Heart left ventricle (tissue), 16 donors: ENCODE measurements at regions of chr17 and their contacts with region 1.

Region 1: GRCh38 chr17:75456417-75457046 is at the start of gene TMEM94:
- DNase-seq: peak; percentile 95 to 97 (median 96)
- ATAC-seq: peak; percentile 98 to 99 (median 99)
- H3K4me3 ChIP-seq: peak within 1 kb of the TSS; percentile 80 to 96 (median 86)
- H3K27ac ChIP-seq: peak within 1 kb of the TSS; percentile 79 to 95 (median 90)
- H3K4me1 ChIP-seq: peaks cover 0 to 46% (median 25%) of the 10 kb centered on the region in 12 donors
- H3K27me3 ChIP-seq: no peaks in the 10 kb centered on the region
- CTCF ChIP-seq: no peak
- POLR2A ChIP-seq: peak in 1 of 2 donors; percentile 58
- total RNA-seq, gene TMEM94: 35.7 to 130 (median 52.7) TPM

Region 2: DNA sequence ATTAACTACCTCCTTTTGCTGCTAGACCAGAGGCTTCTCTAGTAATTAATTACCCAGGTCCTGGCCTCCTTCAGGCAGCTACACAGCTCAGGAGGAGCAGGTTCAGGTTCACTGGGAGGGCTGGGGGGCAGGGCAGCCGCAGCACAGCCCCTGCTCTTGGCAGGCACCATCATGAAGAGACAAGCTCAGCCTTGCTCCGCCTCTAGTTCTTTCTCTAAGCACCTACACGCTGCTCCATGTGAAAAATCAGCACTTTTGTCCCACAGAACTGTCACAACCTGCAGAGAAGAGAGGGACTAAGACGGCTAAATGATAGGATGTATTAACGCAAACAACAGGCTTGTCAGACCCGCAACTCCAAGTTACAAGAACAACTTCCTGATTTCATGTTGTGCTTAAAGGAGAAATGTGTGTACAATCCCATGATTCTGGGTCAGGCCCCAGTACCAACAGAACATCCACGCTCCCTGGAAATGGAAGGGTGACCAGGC is 104.4 kb before region 1 on chr17:
- intact Hi-C with region 1: no loop called
- DNase-seq: no peak
- ATAC-seq: no peak
- H3K4me3 ChIP-seq: no peak overlapping the region
- H3K27ac ChIP-seq: peak overlapping the region in 2 of 12 donors; percentile 13 to 34
- H3K4me1 ChIP-seq: peaks cover 0 to 85% (median 11%) of the 10 kb centered on the region in 12 donors
- H3K27me3 ChIP-seq: no peaks in the 10 kb centered on the region
- CTCF ChIP-seq: no peak
- POLR2A ChIP-seq: no peak

Region 3: DNA sequence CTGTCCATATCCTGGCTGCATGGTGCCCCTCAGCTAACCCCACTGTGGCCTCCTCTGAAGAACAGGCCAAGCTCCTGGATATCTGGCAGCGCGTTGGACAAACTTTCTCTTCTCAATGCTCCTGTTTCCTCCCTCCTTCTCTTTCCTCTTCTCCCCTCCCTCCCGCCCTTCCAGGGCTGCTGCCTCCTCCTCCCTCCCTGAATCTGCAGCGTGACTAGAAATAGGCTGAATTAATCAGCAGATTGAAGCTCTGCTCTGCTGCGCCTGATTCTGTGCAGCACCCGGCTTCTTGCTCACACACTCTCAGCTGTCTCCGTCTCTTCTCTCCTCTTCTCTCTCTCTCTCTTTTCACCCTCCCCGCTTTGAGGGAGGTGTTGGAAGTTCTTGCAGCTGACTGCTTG is 19.7 kb after region 1 on chr17:
- intact Hi-C with region 1: loop called in 1 of 10 experiments (anchors 2 kb)
- DNase-seq: peak in 2 of 5 donors; percentile 70 to 73
- ATAC-seq: peak; percentile 76 to 80 (median 78)
- H3K4me3 ChIP-seq: peak overlapping the region in 8 of 12 donors; percentile 16 to 48 (median 32)
- H3K27ac ChIP-seq: peak overlapping the region; percentile 59 to 94 (median 82)
- H3K4me1 ChIP-seq: peaks cover 17 to 70% (median 43%) of the 10 kb centered on the region in 12 donors
- H3K27me3 ChIP-seq: no peaks in the 10 kb centered on the region
- CTCF ChIP-seq: no peak
- POLR2A ChIP-seq: no peak

Region 4: GRCh38 chr17:75504347-75504964 is 47.9 kb after region 1 on chr17:
- intact Hi-C with region 1: loop called in 1 of 10 experiments (anchors 5 kb)
- DNase-seq: peak in 2 of 5 donors; percentile 39 to 64
- ATAC-seq: peak in 2 of 4 donors; percentile 5 to 16
- H3K4me3 ChIP-seq: no peak overlapping the region
- H3K27ac ChIP-seq: peak overlapping the region in 4 of 12 donors; percentile 17 to 44 (median 21)
- H3K4me1 ChIP-seq: peaks cover 0 to 68% (median 25%) of the 10 kb centered on the region in 12 donors
- H3K27me3 ChIP-seq: no peaks in the 10 kb centered on the region
- CTCF ChIP-seq: peak; percentile 35 to 64 (median 46)
- POLR2A ChIP-seq: no peak